Natural killer cell (primary cell): ENCODE measurements at regions of chr10 and their contacts with region 1.

Region 1: DNA sequence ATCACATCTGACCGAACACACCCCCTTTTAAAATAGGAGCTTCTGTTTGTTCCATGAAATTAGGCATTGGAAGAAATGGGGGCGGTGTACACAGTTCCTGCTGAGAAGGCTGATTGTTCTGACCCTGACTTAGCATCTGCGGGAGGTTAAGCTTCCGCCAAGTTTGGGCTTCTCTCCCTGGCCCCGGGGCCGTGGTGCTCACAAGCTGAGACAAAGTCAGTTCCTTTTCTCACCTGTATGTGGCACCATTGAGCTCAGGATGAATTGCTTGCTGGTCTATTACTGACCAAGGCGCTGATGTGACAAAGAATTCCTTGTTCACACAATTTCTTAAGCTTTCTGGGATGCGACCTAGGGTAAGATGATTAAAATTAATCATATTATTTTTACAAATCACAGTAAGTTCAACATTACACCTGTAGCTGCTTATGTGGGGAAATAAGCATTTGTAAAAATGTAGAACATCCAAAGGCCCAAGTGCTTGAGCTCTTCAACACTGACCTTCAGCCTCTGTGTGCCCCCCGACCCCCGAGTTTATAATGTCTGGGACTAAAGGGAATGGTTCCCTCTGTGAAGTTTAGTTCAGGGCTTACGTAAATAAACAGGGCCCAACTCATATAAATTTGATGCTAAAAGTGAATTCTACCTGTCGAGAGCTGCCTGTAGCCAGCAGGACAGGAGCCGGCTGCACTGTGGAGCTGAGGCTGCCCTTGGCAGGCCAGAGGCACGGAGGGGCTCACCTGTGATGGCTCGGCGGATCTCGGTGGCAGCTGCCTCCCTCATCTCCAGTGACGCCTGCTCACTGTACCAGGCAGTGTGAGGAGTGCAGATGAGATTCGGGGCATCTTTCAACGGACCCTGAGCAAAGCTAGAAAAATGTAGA is 50.8 kb downstream of the ZRANB1 start:
- DNase-seq: peak in 1 of 2 donors; percentile 43
- ATAC-seq: peak; percentile 68 to 88 (median 79)
- H3K4me3 ChIP-seq: no peak overlapping the region
- H3K4me3 Mint-ChIP-seq: no peak overlapping the region
- H3K27ac ChIP-seq: no peak overlapping the region
- H3K27ac Mint-ChIP-seq: peak overlapping the region; percentile 27 to 38
- H3K4me1 ChIP-seq: no peaks in the 10 kb centered on the region
- H3K4me1 Mint-ChIP-seq: peaks cover 6 to 8% of the 10 kb centered on the region in 2 donors
- H3K27me3 ChIP-seq: no peaks in the 10 kb centered on the region
- H3K27me3 Mint-ChIP-seq: no peaks in the 10 kb centered on the region
- CTCF ChIP-seq: peak; percentile 65

Region 2: GRCh38 chr10:125023862-125024489 is 31.3 kb after region 1 on chr10:
- intact Hi-C with region 1: no loop called
- DNase-seq: no peak
- ATAC-seq: no peak
- H3K4me3 ChIP-seq: no peak overlapping the region
- H3K4me3 Mint-ChIP-seq: no peak overlapping the region
- H3K27ac ChIP-seq: no peak overlapping the region
- H3K27ac Mint-ChIP-seq: peak overlapping the region; percentile 64 to 83
- H3K4me1 ChIP-seq: peaks cover 31% of the 10 kb centered on the region
- H3K4me1 Mint-ChIP-seq: peaks cover 69 to 76% of the 10 kb centered on the region in 2 donors
- H3K27me3 ChIP-seq: no peaks in the 10 kb centered on the region
- H3K27me3 Mint-ChIP-seq: no peaks in the 10 kb centered on the region
- CTCF ChIP-seq: no peak

Region 3: GRCh38 chr10:125343118-125343925 is 350.6 kb after region 1 on chr10:
- intact Hi-C with region 1: loop called (anchors 5 kb)
- DNase-seq: no peak
- ATAC-seq: peak in 1 of 3 donors; percentile 45
- H3K4me3 ChIP-seq: no peak overlapping the region
- H3K4me3 Mint-ChIP-seq: no peak overlapping the region
- H3K27ac ChIP-seq: no peak overlapping the region
- H3K27ac Mint-ChIP-seq: no peak overlapping the region
- H3K4me1 ChIP-seq: no peaks in the 10 kb centered on the region
- H3K4me1 Mint-ChIP-seq: no peaks in the 10 kb centered on the region
- H3K27me3 ChIP-seq: no peaks in the 10 kb centered on the region
- H3K27me3 Mint-ChIP-seq: peaks cover 16 to 42% of the 10 kb centered on the region in 2 donors
- CTCF ChIP-seq: peak; percentile 56